Lower leg skin (tissue), 4 donors: ENCODE measurements at regions of chr2 and their contacts with region 1.

Region 1: DNA sequence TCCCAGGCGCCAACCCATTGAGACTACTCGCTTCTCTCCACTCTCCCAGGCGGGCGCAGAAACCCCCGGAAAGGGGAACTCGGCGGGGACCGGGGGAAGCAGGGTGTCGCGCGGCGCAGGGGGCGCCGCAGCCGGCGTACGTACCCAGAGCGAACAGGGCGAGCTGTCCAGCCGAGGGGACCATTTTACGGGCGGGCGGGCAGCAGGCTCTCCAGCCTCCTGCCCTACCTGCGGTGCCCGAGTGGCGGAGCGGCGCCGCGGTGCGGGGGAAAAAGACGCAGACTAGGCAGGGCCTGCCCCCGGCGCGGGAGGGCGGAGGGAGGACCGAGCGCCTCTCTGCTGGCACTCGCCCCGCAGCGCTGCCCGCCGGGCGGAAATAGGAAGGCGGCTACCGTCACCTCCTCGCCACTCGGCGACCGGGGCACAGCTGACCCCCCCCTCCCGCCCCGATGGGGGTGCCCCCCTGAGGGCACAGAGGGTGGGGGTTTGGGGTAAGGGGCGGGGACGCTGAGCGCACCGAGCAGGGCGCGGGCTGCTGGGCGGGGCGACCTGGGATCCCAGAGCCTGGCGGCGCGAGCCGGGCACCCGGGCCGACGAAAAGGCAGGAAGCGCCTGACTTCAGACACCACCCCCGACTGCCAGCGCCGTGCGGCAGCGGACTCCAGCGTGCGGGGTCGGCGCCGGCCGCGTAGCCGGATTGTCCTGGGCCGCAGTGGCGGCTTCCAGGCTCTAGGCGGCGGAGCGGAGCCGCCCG is at the start of gene TGFA:
- DNase-seq: peak; percentile 67 to 93
- H3K4me3 ChIP-seq: peak within 1 kb of the TSS; percentile 48
- CTCF ChIP-seq: no peak
- POLR2A ChIP-seq: no peak
- total RNA-seq, gene TGFA: 56.5 to 78.3 (median 65.0) TPM

Region 2: DNA sequence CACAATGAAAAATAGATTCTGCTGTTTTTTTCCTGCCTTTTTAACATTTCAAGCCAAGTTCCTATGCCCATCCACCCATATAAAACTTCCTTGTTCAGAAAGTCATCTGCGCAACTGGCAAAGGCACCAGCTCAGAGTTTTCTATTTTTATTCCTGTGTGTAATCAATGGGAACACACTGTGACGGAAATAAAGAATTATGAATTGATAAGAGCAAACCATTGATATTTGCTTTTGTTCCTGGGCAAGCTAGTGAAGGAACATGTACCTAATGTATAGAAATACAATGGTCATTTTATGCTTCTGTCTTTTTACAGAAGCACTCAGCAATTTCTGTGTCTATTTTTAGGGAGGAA is 879.5 kb before region 1 on chr2:
- intact Hi-C with region 1: no loop called
- DNase-seq: no peak
- H3K4me3 ChIP-seq: no peak overlapping the region
- CTCF ChIP-seq: no peak
- POLR2A ChIP-seq: no peak

Region 3: GRCh38 chr2:70520825-70521224 is 32.9 kb before region 1 on chr2:
- intact Hi-C with region 1: loop called (anchors 2 kb)
- DNase-seq: peak in 1 of 2 donors; percentile 70
- H3K4me3 ChIP-seq: no peak overlapping the region
- CTCF ChIP-seq: no peak
- POLR2A ChIP-seq: no peak

Region 4: DNA sequence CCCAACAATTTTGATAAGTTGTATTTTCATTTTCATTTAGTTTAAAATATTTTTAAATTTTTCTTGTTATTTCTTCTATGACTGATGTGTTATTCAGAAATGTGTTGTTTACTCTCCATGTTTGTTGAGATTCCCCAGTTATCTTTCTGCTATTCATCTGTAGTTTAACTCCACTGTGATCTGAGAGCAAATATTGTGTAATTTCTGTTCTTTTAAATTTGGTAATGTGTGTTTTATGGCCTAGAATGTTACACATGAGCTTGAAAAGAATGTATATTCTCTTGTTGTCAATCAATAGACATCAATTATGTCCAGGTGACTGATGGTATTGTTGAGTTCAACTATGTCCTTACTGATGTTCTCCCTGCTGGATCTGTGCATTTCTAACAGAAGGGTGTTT is 1405.7 kb after region 1 on chr2:
- intact Hi-C with region 1: loop called (anchors 5 kb)
- DNase-seq: no peak
- H3K4me3 ChIP-seq: no peak overlapping the region
- CTCF ChIP-seq: no peak
- POLR2A ChIP-seq: no peak